CD8-positive, alpha-beta T cell (primary cell): ENCODE measurements at regions of chr11 and their contacts with region 1.

Region 1: GRCh38 chr11:82718307-82718706 is 15.4 kb downstream of the FAM181B start:
- DNase-seq: peak in 3 of 9 experiments; percentile 8 to 48 (median 15)
- ATAC-seq: peak; percentile 36
- H3K4me3 ChIP-seq: no peak overlapping the region
- H3K4me3 Mint-ChIP-seq: no peak overlapping the region
- H3K27ac ChIP-seq: no peak overlapping the region
- H3K27ac Mint-ChIP-seq: no peak overlapping the region
- H3K4me1 ChIP-seq: no peaks in the 10 kb centered on the region
- H3K4me1 Mint-ChIP-seq: no peaks in the 10 kb centered on the region
- H3K27me3 ChIP-seq: no peaks in the 10 kb centered on the region
- H3K27me3 Mint-ChIP-seq: peaks cover 6% of the 10 kb centered on the region
- CTCF ChIP-seq: peak; percentile 67

Region 2: GRCh38 chr11:82858556-82859091 is 140.3 kb after region 1 on chr11:
- CTCF ChIA-PET with region 1: interaction called, 13 read pairs
- POLR2A ChIA-PET with region 1: no interaction called
- intact Hi-C with region 1: no loop called
- DNase-seq: no peak
- ATAC-seq: no peak
- H3K4me3 ChIP-seq: no peak overlapping the region
- H3K4me3 Mint-ChIP-seq: no peak overlapping the region
- H3K27ac ChIP-seq: no peak overlapping the region
- H3K27ac Mint-ChIP-seq: no peak overlapping the region
- H3K4me1 ChIP-seq: no peaks in the 10 kb centered on the region
- H3K4me1 Mint-ChIP-seq: peaks cover 5% of the 10 kb centered on the region
- H3K27me3 ChIP-seq: no peaks in the 10 kb centered on the region
- H3K27me3 Mint-ChIP-seq: no peaks in the 10 kb centered on the region
- CTCF ChIP-seq: no peak

Region 3: GRCh38 chr11:82996966-82997606 is 278.8 kb after region 1 on chr11:
- CTCF ChIA-PET with region 1: no interaction called
- POLR2A ChIA-PET with region 1: no interaction called
- intact Hi-C with region 1: loop called in 1 of 2 experiments (anchors 10 kb)
- DNase-seq: no peak
- ATAC-seq: peak; percentile 17
- H3K4me3 ChIP-seq: no peak overlapping the region
- H3K4me3 Mint-ChIP-seq: no peak overlapping the region
- H3K27ac ChIP-seq: no peak overlapping the region
- H3K27ac Mint-ChIP-seq: no peak overlapping the region
- H3K4me1 ChIP-seq: peaks cover 28% of the 10 kb centered on the region
- H3K4me1 Mint-ChIP-seq: peaks cover 39% of the 10 kb centered on the region
- H3K27me3 ChIP-seq: no peaks in the 10 kb centered on the region
- H3K27me3 Mint-ChIP-seq: no peaks in the 10 kb centered on the region
- CTCF ChIP-seq: no peak

Region 4: DNA sequence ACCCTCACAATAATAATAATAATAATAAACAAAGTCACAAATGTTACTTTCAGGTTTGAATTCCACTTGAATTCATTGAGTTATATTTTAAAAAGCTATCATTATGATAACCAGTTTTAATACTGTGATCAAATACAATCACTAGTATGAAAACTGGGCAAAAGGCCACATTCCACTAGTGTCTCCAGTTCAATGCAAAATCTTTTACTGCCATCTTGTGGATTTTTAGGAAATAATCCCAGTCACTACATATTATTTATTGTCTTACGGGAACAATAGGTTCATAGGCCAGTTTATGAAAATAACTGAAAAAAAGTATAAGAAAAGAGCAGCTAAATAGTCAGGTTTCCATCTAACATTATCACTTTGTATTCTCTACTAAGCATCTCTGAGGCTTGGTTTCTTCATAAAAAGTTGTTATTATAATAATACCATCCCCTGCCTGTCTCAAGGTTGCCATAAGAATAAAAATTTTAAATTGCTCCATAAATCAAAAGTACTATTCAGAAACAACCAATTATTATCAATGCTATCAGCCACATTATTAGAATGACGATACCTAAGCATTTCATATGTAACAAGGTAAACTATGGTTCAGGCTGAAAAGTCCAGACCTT is 1101.7 kb after region 1 on chr11:
- CTCF ChIA-PET with region 1: interaction called, 6 read pairs
- POLR2A ChIA-PET with region 1: no interaction called
- intact Hi-C with region 1: loop called in 1 of 2 experiments (anchors 1 kb)
- DNase-seq: peak in 2 of 9 experiments; percentile 17 to 29
- ATAC-seq: no peak
- H3K4me3 ChIP-seq: no peak overlapping the region
- H3K4me3 Mint-ChIP-seq: no peak overlapping the region
- H3K27ac ChIP-seq: no peak overlapping the region
- H3K27ac Mint-ChIP-seq: no peak overlapping the region
- H3K4me1 ChIP-seq: no peaks in the 10 kb centered on the region
- H3K4me1 Mint-ChIP-seq: no peaks in the 10 kb centered on the region
- H3K27me3 ChIP-seq: no peaks in the 10 kb centered on the region
- H3K27me3 Mint-ChIP-seq: peaks cover 3% of the 10 kb centered on the region
- CTCF ChIP-seq: peak; percentile 33